HCT116 (cell line): ENCODE measurements at regions of chr19 and their contacts with region 1.

Region 1: GRCh38 chr19:39576511-39576910 is 25.8 kb upstream of the LGALS13 start:
- DNase-seq: no peak
- ATAC-seq: no peak
- H3K4me3 ChIP-seq: no peak overlapping the region
- H3K27ac ChIP-seq: no peak overlapping the region
- H3K4me1 ChIP-seq: no peaks in the 10 kb centered on the region
- H3K27me3 ChIP-seq: peaks cover 16% of the 10 kb centered on the region; the same call in 1 of the 2 replicates
- CTCF ChIP-seq: no peak
- POLR2A ChIP-seq: no peak
- RAD21 ChIP-seq: no peak

Region 2: DNA sequence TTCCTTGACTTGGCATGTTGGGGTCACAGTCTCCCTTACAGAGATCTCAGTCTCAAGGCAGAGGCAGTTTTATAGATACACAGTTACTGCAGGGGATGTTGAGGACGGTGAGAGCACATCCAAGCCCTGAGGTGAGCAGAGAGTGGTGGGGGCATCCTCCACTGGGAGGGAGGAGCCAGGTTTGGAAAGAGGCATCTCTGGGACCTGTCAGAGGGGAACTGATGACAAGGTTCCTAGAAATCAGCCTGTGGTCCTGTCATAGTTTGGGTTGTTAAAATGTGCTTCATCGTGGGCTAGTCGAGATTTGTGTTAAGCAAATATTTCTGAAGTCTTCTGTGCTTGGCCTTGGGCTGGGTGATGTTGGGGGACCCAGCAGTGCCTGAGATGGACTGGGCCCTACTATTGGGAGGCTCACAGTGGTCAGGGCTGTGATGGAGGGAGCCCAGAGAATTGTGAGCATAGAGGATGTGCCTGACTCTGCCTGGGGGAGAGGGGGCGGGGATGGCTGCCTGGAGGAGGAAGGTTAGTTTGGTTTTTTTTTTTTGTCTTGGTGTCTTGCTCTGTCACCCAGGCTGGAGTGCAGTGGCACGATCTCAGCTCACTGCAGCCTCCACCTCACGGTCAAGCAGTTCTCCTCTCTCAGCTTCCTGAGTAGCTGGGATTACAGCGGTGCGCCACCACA is 127.3 kb before region 1 on chr19:
- CTCF ChIA-PET with region 1: no interaction called
- POLR2A ChIA-PET with region 1: no interaction called
- RAD21 ChIA-PET with region 1: no interaction called
- intact Hi-C with region 1: no loop called
- DNase-seq: no peak
- ATAC-seq: no peak
- H3K4me3 ChIP-seq: no peak overlapping the region
- H3K27ac ChIP-seq: no peak overlapping the region
- H3K4me1 ChIP-seq: peaks cover 6 to 24% of the 10 kb centered on the region in 2 experiments
- H3K27me3 ChIP-seq: no peaks in the 10 kb centered on the region
- CTCF ChIP-seq: no peak
- POLR2A ChIP-seq: no peak
- RAD21 ChIP-seq: no peak

Region 3: DNA sequence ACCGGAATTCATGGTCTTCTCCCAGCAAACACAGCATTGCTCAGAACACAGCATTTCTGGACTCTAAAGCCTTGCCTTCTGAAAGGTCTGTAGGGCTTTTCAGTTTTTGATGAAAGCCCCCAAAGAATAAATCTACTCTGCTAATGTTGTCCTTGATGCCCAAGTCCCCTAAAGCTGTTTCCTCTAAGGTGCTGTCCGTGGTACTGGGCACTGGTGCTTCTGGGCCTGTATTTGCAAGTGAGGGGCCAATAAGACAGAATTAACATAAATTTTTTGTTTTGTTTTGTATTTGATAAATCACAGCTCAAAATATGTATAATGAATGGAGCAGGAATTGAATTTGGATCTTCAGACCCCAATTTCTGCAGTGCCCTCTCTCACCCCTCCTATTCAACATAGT is 13.8 kb after region 1 on chr19:
- CTCF ChIA-PET with region 1: no interaction called
- POLR2A ChIA-PET with region 1: no interaction called
- RAD21 ChIA-PET with region 1: no interaction called
- intact Hi-C with region 1: no loop called
- DNase-seq: no peak
- ATAC-seq: no peak
- H3K4me3 ChIP-seq: no peak overlapping the region
- H3K27ac ChIP-seq: no peak overlapping the region
- H3K4me1 ChIP-seq: no peaks in the 10 kb centered on the region
- H3K27me3 ChIP-seq: peaks cover 39% of the 10 kb centered on the region
- CTCF ChIP-seq: no peak
- POLR2A ChIP-seq: no peak
- RAD21 ChIP-seq: no peak

Region 4: GRCh38 chr19:39631178-39631577 is 54.7 kb after region 1 on chr19:
- CTCF ChIA-PET with region 1: no interaction called
- POLR2A ChIA-PET with region 1: no interaction called
- RAD21 ChIA-PET with region 1: no interaction called
- intact Hi-C with region 1: loop called (anchors 10 kb)
- DNase-seq: no peak
- ATAC-seq: no peak
- H3K4me3 ChIP-seq: no peak overlapping the region
- H3K27ac ChIP-seq: no peak overlapping the region
- H3K4me1 ChIP-seq: no peaks in the 10 kb centered on the region
- H3K27me3 ChIP-seq: peaks cover 24% of the 10 kb centered on the region
- CTCF ChIP-seq: no peak
- POLR2A ChIP-seq: no peak
- RAD21 ChIP-seq: no peak